ENCODE measurements at regions of chr11 and their contacts with region 1.

Region 1: GRCh38 chr11:7436657-7437056 is 48.6 kb upstream of the OLFML1 start:
- DNase-seq: peak; percentile 89
- H3K4me3 ChIP-seq: peak overlapping the region; percentile 39
- H3K27ac ChIP-seq: peak overlapping the region; percentile 56
- H3K4me1 ChIP-seq: peaks cover 28% of the 10 kb centered on the region
- CTCF ChIP-seq: no peak

Region 2: GRCh38 chr11:6249784-6250555 is 1186.7 kb before region 1 on chr11:
- CTCF ChIA-PET with region 1: no interaction called
- POLR2A ChIA-PET with region 1: no interaction called
- intact Hi-C with region 1: no loop called
- DNase-seq: no peak
- H3K4me3 ChIP-seq: no peak overlapping the region
- H3K27ac ChIP-seq: no peak overlapping the region
- H3K4me1 ChIP-seq: no peaks in the 10 kb centered on the region
- CTCF ChIP-seq: no peak

Region 3: DNA sequence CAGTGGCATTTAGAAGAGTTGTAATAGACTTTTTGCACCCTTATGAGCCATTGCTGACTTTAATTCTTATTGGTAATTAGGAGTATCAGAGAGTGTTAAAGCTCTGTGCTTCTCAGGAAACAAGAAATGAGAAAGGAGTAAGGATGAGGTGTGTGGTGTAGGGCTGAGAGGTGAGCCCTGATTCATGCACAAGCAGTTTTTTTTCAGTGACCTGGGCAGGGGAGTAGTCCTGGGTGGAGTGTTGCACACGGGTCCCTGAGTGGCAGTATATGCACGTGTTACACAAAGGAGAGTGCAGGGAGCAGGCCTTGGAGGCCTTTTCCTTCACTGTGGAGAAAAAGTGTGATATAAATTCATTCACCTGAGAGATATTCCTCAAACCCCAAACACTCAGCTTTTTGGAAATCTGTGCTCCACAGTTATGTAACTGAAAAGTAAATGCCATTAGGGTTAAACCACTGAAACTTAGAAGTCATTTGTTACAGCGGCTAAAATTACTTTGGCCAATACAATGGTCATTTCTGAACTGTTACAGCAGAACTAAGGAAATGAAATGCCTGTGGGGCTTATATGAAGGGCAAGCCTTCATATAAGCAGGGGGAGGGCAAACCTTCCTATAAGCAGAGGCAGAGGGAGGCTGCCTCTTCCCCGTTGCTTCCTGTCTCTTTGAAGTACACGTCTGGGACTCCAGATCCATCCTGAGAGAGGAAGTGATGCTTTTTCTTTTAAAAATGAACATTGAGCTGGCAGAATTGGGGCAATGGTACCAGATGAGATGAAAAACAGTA is 13.9 kb before region 1 on chr11:
- CTCF ChIA-PET with region 1: interaction called, 5 read pairs
- POLR2A ChIA-PET with region 1: interaction called, 10 read pairs
- intact Hi-C with region 1: no loop called
- DNase-seq: peak; percentile 30
- H3K4me3 ChIP-seq: no peak overlapping the region
- H3K27ac ChIP-seq: no peak overlapping the region
- H3K4me1 ChIP-seq: peaks cover 24% of the 10 kb centered on the region
- CTCF ChIP-seq: peak; percentile 42

Region 4: GRCh38 chr11:7657306-7658025 is 220.8 kb after region 1 on chr11:
- CTCF ChIA-PET with region 1: no interaction called
- POLR2A ChIA-PET with region 1: no interaction called
- intact Hi-C with region 1: no loop called
- DNase-seq: no peak
- H3K4me3 ChIP-seq: no peak overlapping the region
- H3K27ac ChIP-seq: no peak overlapping the region
- H3K4me1 ChIP-seq: no peaks in the 10 kb centered on the region
- CTCF ChIP-seq: peak; percentile 36; the same call in 1 of the 2 replicates